Dorsolateral prefrontal cortex (tissue), 120 donors: ENCODE measurements at regions of chr11 and their contacts with region 1.

Region 1: GRCh38 chr11:117098269-117099232 is at the start of gene SIK3:
- DNase-seq: peak; percentile 92 to 99 (median 96)
- H3K4me3 ChIP-seq: peak within 1 kb of the TSS; percentile 71 to 99 (median 91)
- H3K27ac ChIP-seq: peak within 1 kb of the TSS; percentile 89 to 100 (median 98)
- H3K27me3 ChIP-seq: no peaks in the 10 kb centered on the region
- CTCF ChIP-seq: peak in 49 of 56 donors; percentile 6 to 89 (median 50)
- total RNA-seq, gene SIK3: 101 to 349 (median 174) TPM

Region 2: DNA sequence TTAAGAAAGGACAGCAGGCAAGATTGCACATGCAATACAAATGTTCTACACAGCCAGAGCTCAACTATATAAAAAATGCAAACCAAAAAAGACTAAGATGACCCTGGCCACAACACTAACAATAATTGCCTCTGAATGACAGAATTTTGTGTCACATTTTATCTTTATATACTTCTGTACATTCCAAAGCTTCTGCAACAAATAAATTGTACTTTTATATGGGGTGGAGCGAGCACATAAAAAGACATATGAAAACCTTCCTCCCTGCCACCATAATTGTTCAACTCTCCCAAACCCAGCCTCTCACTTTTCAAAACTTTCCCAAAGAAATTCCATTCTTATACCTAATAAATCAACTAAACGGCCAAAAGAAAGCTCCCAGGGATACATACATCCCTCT is 336.4 kb before region 1 on chr11:
- intact Hi-C with region 1: no loop called
- DNase-seq: no peak
- H3K4me3 ChIP-seq: no peak overlapping the region
- H3K27ac ChIP-seq: no peak overlapping the region
- H3K27me3 ChIP-seq: no peaks in the 10 kb centered on the region
- CTCF ChIP-seq: no peak

Region 3: DNA sequence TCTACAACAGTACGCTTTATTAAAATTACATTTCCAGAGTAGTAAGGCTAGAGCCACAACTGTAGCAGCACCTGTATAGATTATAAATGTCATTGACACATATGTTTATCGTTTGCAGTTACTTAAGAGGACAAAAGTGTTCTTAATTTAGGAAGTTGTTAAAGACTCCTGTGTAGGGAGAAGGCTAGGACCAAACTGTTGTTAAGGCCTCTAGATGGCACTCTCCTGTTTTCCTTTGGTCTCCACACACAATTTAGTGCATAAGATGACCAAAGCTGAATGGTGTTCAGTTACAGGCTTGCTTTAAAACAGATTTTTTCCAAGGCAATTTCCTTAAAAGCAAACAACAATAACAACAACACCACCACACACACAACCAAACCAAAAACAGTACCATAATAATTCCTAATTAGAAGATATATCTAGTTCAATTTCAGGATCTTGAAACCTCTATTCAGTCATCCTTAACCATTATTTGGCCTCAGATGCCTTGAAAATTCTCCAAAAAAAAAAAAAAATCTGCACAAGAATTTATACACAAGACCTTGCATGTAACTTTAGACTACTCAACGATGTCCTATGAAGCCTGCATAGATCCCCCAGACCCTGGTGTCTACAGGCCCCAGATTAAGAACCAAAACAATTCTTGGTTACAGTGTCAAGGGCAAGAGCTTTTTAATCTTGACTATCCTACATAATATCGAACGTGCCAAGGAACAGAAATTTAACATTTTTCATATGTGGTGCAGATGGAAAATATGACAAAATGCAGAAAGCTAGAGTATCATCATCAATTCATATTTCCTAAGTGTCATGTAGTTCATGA is 218.5 kb before region 1 on chr11:
- intact Hi-C with region 1: loop called (anchors 5 kb)
- DNase-seq: no peak
- H3K4me3 ChIP-seq: no peak overlapping the region
- H3K27ac ChIP-seq: peak overlapping the region in 52 of 59 donors; percentile 3 to 88 (median 67)
- H3K27me3 ChIP-seq: no peaks in the 10 kb centered on the region
- CTCF ChIP-seq: peak in 55 of 56 donors; percentile 39 to 88 (median 74)

Region 4: GRCh38 chr11:116972691-116973090 is 125.9 kb before region 1 on chr11:
- intact Hi-C with region 1: loop called in 1 of 2 experiments (anchors 5 kb)
- DNase-seq: no peak
- H3K4me3 ChIP-seq: no peak overlapping the region
- H3K27ac ChIP-seq: peak overlapping the region in 52 of 59 donors; percentile 3 to 96 (median 63)
- H3K27me3 ChIP-seq: no peaks in the 10 kb centered on the region
- CTCF ChIP-seq: peak in 22 of 56 donors; percentile 9 to 48 (median 24)

Region 5: DNA sequence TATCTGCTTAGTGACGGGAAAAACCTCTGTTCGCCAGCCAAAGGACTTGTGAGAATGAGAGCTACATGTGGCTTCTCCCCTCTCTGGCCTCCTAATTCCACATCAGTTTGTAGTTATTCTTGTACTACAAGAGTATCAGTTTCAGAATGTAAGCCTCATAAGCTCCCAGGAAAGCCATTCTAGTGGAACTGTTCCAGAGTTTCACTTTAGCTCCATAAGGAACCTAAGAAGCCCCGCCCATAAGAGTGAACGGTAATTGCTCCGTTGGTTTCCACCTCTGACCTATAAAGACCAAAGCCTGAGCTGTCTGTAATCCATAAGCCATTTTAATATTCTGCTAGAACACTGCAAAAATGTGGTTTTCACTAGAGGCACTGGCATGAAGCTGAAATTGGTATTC is 53.4 kb before region 1 on chr11:
- intact Hi-C with region 1: loop called (anchors 5 to 10 kb)
- DNase-seq: no peak
- H3K4me3 ChIP-seq: peak overlapping the region in 7 of 59 donors; percentile 1 to 32 (median 9)
- H3K27ac ChIP-seq: peak overlapping the region; percentile 30 to 100 (median 89)
- H3K27me3 ChIP-seq: no peaks in the 10 kb centered on the region
- CTCF ChIP-seq: no peak